Dorsolateral prefrontal cortex (tissue), 120 donors: ENCODE measurements at regions of chr1 and their contacts with region 1.

Region 1: GRCh38 chr1:93814059-93814794 is 64.8 kb downstream of the DNTTIP2 start:
- DNase-seq: peak in 6 of 10 donors; percentile 33 to 79 (median 47)
- H3K4me3 ChIP-seq: no peak overlapping the region
- H3K27ac ChIP-seq: peak overlapping the region in 5 of 59 donors; percentile 34 to 49 (median 42)
- H3K27me3 ChIP-seq: no peaks in the 10 kb centered on the region
- CTCF ChIP-seq: peak; percentile 56 to 99 (median 94)

Region 2: DNA sequence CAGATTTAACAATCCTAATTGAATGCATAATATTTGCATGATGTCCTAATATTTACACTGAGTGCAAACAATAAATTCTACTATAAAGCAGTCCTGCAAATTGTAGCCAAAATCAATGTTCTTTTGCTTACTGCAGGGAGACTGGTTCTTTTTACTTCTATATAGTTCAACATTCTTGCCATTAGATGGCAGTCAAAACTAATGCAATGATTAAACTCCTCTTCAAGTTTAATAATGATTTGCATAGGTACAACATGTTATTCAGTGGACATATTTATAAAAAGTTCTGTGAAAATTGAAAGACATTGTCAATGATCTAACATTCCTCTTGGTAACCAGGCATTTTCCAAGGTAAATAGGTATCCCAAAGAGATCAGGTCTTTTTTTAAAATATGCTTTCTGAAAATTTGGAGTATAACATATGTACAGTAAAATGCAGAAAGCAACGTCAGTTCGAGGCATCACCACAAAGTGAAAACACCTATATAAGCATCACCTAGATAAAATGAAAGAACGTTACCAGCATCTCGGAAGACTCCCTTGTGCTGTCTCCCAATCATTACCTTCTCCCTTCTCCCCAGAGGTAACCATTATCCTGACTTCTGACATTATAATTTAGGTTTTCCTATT is 376.1 kb before region 1 on chr1:
- intact Hi-C with region 1: loop called in 1 of 2 experiments (anchors 5 kb)
- DNase-seq: no peak
- H3K4me3 ChIP-seq: no peak overlapping the region
- H3K27ac ChIP-seq: no peak overlapping the region
- H3K27me3 ChIP-seq: peaks cover 0 to 7% (median 0%) of the 10 kb centered on the region in 45 donors
- CTCF ChIP-seq: peak; percentile 48 to 89 (median 70)

Region 3: GRCh38 chr1:93629099-93630059 is 184.8 kb before region 1 on chr1:
- intact Hi-C with region 1: loop called (anchors 1 to 2 kb)
- DNase-seq: peak in 1 of 10 donors; percentile 38
- H3K4me3 ChIP-seq: no peak overlapping the region
- H3K27ac ChIP-seq: peak overlapping the region in 4 of 59 donors; percentile 0 to 15 (median 4)
- H3K27me3 ChIP-seq: peaks cover 0 to 4% (median 0%) of the 10 kb centered on the region in 45 donors
- CTCF ChIP-seq: peak; percentile 75 to 98 (median 88)

Region 4: GRCh38 chr1:93680757-93681550 is 133.3 kb before region 1 on chr1:
- intact Hi-C with region 1: no loop called
- DNase-seq: peak; percentile 44 to 74 (median 68)
- H3K4me3 ChIP-seq: peak overlapping the region; percentile 56 to 89 (median 76)
- H3K27ac ChIP-seq: peak overlapping the region in 55 of 59 donors; percentile 47 to 94 (median 82)
- H3K27me3 ChIP-seq: peaks cover 0 to 12% (median 0%) of the 10 kb centered on the region in 45 donors
- CTCF ChIP-seq: peak in 51 of 56 donors; percentile 19 to 56 (median 40)

Region 5: DNA sequence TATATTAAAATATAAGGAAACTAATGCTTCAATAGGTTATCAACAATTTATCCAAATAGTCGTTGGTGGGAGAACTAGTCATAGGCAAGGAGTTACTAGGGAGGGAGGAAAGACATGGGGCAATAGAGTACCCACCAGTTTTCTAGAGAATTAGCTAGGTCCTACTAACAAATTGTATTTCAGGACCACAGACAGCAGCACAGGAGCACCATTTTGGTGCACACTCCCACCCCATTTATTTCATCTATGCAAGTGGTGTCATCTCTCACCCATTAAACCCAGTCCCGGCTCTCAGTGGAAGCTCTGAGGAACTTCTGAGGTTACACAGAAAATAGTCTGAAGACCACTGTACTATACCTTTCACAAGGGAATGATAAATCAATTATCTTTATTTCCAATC is 43.6 kb before region 1 on chr1:
- intact Hi-C with region 1: loop called in 1 of 2 experiments (anchors 5 kb)
- DNase-seq: no peak
- H3K4me3 ChIP-seq: no peak overlapping the region
- H3K27ac ChIP-seq: no peak overlapping the region
- H3K27me3 ChIP-seq: peaks cover 0 to 5% (median 0%) of the 10 kb centered on the region in 45 donors
- CTCF ChIP-seq: no peak